ENCODE measurements at regions of chr9 and their contacts with region 1.

Region 1: DNA sequence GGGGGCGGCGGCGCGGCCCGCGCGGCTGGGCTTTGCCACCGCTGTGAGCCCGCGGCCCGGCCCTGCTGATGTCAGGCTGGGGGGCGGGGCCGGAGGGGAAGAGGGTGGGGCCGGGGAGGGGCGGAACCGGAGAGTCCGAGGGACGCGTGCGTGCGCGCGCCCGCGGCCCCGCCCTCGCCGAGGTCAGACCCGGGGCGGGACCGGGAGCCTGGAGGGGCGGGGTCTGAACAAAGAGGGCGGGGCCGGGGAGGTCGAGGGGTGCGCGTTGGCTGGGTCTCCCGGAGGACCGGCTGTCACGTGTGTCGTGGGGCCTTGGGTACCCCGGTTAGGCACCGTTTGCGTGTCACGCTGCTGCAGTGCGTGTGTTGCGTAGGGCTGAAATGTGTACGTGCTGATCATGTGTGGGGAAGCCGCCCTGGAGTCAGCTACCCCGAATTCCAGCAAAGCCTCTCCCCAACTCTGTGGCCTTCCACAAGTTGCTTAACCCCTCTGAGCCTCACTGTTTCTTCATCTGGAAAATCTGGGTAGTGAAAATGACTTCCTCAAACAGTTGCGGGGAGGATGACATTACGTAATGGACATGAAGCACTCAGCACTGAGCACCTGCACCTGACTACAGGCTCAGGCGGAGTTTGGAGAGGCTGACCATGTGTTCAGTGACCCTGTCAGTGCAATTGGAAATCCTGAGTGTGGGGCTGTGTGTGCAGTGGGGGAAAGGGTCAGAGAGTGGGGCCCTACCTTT is at the start of gene RALGDS:
- DNase-seq: peak; percentile 85 to 91 (median 87)
- H3K4me3 ChIP-seq: peak within 1 kb of the TSS in 1 of 2 donors; percentile 55
- H3K4me3 Mint-ChIP-seq: peak within 1 kb of the TSS; percentile 69 to 84 (median 80)
- H3K27ac ChIP-seq: peak within 1 kb of the TSS; percentile 88
- H3K27ac Mint-ChIP-seq: peak within 1 kb of the TSS; percentile 95 to 100 (median 98)
- H3K4me1 ChIP-seq: peaks cover 93% of the 10 kb centered on the region
- H3K4me1 Mint-ChIP-seq: peaks cover 36 to 86% (median 64%) of the 10 kb centered on the region in 4 donors
- H3K27me3 ChIP-seq: no peaks in the 10 kb centered on the region
- H3K27me3 Mint-ChIP-seq: no peaks in the 10 kb centered on the region
- total RNA-seq, gene RALGDS: 123 to 131 TPM

Region 2: DNA sequence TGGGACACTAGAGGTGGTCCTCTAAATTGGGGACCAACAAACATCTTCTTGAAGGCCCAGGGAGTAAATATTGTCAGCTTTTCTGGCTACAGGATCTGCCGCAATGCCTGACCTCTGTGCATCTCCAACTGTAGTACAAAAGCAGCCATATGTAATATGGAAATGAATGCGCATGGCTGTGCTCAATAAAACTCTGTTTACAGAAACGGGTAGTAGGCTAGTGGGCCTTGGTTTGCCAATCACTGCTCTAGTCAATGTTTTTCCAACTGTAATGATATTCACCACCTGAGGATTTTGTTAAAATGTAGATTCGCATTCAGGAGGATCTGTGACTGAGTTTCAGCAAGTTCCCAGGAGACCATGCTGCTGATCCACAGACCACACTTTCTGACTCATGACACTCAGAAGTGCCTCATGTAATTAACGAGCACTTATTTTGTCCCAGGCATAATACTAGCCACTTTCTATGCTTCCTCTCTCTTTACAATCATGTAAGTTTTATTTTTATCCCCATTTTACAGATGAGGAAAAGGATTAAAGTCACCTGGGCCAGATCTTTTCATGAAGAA is 1138.6 kb before region 1 on chr9:
- CTCF ChIA-PET with region 1: no interaction called
- POLR2A ChIA-PET with region 1: no interaction called
- intact Hi-C with region 1: no loop called
- DNase-seq: no peak
- H3K4me3 ChIP-seq: no peak overlapping the region
- H3K4me3 Mint-ChIP-seq: no peak overlapping the region
- H3K27ac ChIP-seq: no peak overlapping the region
- H3K27ac Mint-ChIP-seq: no peak overlapping the region
- H3K4me1 ChIP-seq: no peaks in the 10 kb centered on the region
- H3K4me1 Mint-ChIP-seq: peaks cover 0 to 5% (median 0%) of the 10 kb centered on the region in 4 donors
- H3K27me3 ChIP-seq: no peaks in the 10 kb centered on the region
- H3K27me3 Mint-ChIP-seq: no peaks in the 10 kb centered on the region

Region 3: DNA sequence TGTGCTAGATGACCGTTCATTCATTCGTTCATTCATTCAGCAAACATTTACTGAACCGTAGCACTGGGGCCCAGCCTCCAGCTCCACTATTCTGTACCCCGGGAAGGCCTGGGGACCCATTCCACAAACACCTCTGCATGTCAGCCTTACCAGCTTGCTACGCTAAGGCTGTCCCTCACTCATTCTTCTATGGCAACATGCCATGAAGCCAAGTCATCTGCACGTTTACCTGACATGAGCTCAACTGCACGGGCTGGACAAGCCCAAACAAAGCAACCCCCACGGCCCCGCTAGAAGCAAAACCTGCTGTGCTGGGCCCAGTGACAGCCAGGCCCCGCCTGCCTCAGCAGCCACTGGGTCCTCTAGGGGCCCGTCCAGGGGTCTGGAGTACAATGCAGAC is 53.5 kb before region 1 on chr9:
- CTCF ChIA-PET with region 1: no interaction called
- POLR2A ChIA-PET with region 1: no interaction called
- intact Hi-C with region 1: no loop called
- DNase-seq: no peak
- H3K4me3 ChIP-seq: no peak overlapping the region
- H3K4me3 Mint-ChIP-seq: no peak overlapping the region
- H3K27ac ChIP-seq: no peak overlapping the region
- H3K27ac Mint-ChIP-seq: no peak overlapping the region
- H3K4me1 ChIP-seq: no peaks in the 10 kb centered on the region
- H3K4me1 Mint-ChIP-seq: no peaks in the 10 kb centered on the region
- H3K27me3 ChIP-seq: no peaks in the 10 kb centered on the region
- H3K27me3 Mint-ChIP-seq: no peaks in the 10 kb centered on the region

Region 4: DNA sequence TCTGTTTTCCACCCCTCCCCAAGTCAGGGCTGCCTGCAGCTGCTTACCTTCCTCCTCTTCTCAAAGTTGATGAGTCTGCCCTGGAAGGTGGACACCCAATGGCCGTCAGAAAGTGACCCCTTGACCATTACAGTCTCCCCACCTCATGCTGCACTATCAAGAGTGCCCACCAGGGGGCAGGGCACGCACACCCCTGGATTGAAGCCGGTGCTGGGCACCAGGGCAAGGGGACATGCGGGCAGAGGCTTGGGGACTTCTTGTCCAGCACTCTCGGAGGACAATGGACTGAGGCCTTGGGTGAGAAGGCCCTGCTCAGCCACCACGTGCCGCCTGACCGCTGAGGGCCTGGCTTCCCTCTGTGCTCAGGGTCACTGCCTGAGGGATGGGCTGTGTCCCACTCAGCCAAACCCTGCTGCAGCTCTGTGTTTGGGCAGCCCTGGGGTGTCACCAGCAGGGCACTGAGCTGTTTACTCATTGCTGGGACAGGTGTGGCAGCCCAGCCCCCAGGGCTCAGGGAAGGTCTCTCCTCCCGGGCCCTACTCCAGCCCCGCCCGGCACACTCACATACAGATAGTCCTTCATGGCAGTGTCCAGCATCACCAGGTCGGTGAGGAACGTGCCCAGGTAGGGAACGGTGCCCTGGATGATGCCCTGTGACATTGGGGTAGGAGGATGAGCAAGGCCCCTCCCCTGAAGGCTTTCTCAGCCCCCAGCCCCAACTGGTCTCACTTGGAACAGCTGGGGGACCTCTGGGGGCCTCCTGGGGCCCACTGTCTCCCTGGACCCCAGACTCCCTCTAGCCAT is 18.0 kb before region 1 on chr9:
- CTCF ChIA-PET with region 1: interaction called, 10 read pairs
- POLR2A ChIA-PET with region 1: interaction called, 7 read pairs
- intact Hi-C with region 1: no loop called
- DNase-seq: peak; percentile 42 to 59 (median 48)
- H3K4me3 ChIP-seq: no peak overlapping the region
- H3K4me3 Mint-ChIP-seq: no peak overlapping the region
- H3K27ac ChIP-seq: peak overlapping the region; percentile 15
- H3K27ac Mint-ChIP-seq: peak overlapping the region in 6 of 7 donors; percentile 52 to 88 (median 82)
- H3K4me1 ChIP-seq: no peaks in the 10 kb centered on the region
- H3K4me1 Mint-ChIP-seq: no peaks in the 10 kb centered on the region
- H3K27me3 ChIP-seq: no peaks in the 10 kb centered on the region
- H3K27me3 Mint-ChIP-seq: no peaks in the 10 kb centered on the region

Region 5: DNA sequence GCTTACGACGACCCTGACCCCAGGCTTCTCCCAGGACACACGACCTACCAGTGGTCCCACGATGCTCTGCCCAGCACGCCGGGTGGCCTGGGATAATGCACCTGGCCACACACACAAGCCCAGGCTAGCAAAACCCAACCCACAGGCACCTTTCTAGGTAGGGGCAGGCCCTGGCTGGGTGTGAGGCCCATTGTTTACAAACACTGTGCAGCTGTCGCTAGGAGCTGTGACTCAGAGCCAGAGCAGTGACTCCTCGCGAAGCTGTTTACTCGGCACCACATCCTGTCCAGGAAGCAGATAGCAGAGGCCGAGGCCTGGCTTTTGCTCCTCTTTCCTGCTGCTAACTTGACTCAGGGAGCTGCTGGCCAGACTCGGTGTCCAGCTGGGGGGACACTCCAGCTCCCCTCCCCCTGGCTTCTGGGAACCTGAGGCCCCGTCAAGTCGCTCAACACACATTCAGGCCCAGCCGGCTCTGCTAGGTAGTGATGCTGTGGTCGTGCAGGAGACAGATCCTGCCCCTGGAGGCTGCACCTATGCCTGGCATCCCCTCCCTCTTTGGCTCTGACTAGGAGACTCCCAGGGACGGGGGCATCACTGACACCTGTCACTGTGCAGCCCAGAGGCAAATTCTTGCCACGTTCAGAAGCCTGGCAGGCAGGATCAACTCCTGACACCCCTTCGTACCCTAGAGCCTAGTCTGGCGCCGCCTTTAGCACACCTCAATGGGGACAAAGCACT is 12.5 kb after region 1 on chr9:
- CTCF ChIA-PET with region 1: interaction called, 6 read pairs
- POLR2A ChIA-PET with region 1: interaction called, 424 read pairs
- intact Hi-C with region 1: loop called (anchors 1 kb)
- DNase-seq: peak; percentile 90 to 98 (median 95)
- H3K4me3 ChIP-seq: peak overlapping the region in 1 of 2 donors; percentile 33
- H3K4me3 Mint-ChIP-seq: peak overlapping the region; percentile 75 to 99 (median 88)
- H3K27ac ChIP-seq: peak overlapping the region; percentile 100
- H3K27ac Mint-ChIP-seq: peak overlapping the region; percentile 100
- H3K4me1 ChIP-seq: peaks cover 99% of the 10 kb centered on the region
- H3K4me1 Mint-ChIP-seq: peaks cover 42 to 93% (median 68%) of the 10 kb centered on the region in 4 donors
- H3K27me3 ChIP-seq: no peaks in the 10 kb centered on the region
- H3K27me3 Mint-ChIP-seq: no peaks in the 10 kb centered on the region

Measured in CD4-positive, alpha-beta memory T cell (primary cell).